Activated CD4-positive, alpha-beta T cell treated with anti-CD3 and anti-CD28 coated beads for 36 hours (primary cell): ENCODE measurements at regions of chr1 and their contacts with region 1.

Region 1: GRCh38 chr1:21659099-21659923 is 9.8 kb downstream of the RAP1GAP start:
- DNase-seq: peak; percentile 90
- ATAC-seq: peak; percentile 94
- H3K4me3 Mint-ChIP-seq: peak overlapping the region; percentile 56
- H3K27ac Mint-ChIP-seq: no peak overlapping the region
- H3K4me1 Mint-ChIP-seq: peaks cover 6% of the 10 kb centered on the region
- H3K27me3 Mint-ChIP-seq: peaks cover 22% of the 10 kb centered on the region

Region 2: GRCh38 chr1:21439721-21440629 is 219.3 kb before region 1 on chr1 and contains the start of gene NBPF3:
- CTCF ChIA-PET with region 1: no interaction called
- POLR2A ChIA-PET with region 1: no interaction called
- intact Hi-C with region 1: loop called in 1 of 2 experiments (anchors 5 kb)
- DNase-seq: peak; percentile 96
- ATAC-seq: peak; percentile 98
- H3K4me3 Mint-ChIP-seq: peak within 1 kb of the TSS; percentile 91
- H3K27ac Mint-ChIP-seq: peak within 1 kb of the TSS; percentile 93
- H3K4me1 Mint-ChIP-seq: peaks cover 17% of the 10 kb centered on the region
- H3K27me3 Mint-ChIP-seq: peaks cover 3% of the 10 kb centered on the region
- total RNA-seq, gene NBPF3: 8.5 to 9.9 TPM

Region 3: GRCh38 chr1:21594935-21595897 is 64.1 kb before region 1 on chr1:
- CTCF ChIA-PET with region 1: interaction called, 3 read pairs
- POLR2A ChIA-PET with region 1: no interaction called
- intact Hi-C with region 1: loop called in 1 of 2 experiments (anchors 1 kb)
- DNase-seq: peak; percentile 85
- ATAC-seq: peak; percentile 71
- H3K4me3 Mint-ChIP-seq: no peak overlapping the region
- H3K27ac Mint-ChIP-seq: no peak overlapping the region
- H3K4me1 Mint-ChIP-seq: peaks cover 5% of the 10 kb centered on the region
- H3K27me3 Mint-ChIP-seq: peaks cover 2% of the 10 kb centered on the region

Region 4: DNA sequence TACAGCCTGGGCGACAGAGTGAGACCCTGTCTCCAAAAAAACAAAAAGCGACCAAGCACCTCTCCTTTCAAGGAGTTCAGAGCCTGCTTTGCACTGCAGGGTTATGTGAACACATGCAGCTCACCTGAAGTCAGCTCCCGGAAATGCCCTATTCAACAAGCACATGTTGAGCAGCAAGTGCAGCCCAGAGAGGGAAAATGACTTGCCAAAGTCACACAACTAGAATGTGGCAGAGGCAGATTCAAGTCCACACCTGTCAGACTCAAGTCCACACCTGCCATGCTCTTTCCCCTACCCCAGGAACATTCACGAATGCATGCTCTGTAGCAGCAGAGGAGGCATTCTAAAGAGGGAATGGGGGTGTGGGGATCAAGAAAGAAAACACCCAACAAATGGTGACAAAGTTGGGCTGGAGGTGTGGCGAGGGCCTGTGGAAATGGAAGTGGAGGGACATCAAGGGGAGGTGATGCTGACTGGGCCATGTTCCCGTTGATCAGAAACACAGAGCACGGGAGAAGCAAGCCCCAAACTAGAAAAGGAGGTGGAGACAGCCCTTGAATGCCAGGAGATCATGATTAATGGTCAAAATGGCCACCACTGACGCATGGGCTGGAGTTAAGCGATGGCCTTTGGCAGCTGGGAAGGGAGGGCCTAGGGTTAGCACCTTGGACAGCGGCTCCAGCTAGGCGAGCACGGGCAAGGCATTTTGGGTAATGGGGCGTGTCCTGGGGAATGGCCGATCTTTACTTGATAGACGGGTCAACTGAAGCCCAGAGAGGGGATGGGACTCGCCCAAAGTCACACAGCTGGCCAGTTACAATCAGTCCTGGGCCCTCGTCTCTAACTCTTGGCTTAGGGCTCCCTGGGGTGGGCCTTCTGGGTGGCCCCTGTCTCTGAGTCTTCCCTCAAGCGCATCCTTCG is 11.6 kb before region 1 on chr1:
- CTCF ChIA-PET with region 1: interaction called, 4 read pairs
- POLR2A ChIA-PET with region 1: no interaction called
- intact Hi-C with region 1: loop called in 1 of 2 experiments (anchors 1 kb)
- DNase-seq: peak; percentile 75
- ATAC-seq: no peak
- H3K4me3 Mint-ChIP-seq: no peak overlapping the region
- H3K27ac Mint-ChIP-seq: no peak overlapping the region
- H3K4me1 Mint-ChIP-seq: peaks cover 13% of the 10 kb centered on the region
- H3K27me3 Mint-ChIP-seq: peaks cover 19% of the 10 kb centered on the region

Region 5: DNA sequence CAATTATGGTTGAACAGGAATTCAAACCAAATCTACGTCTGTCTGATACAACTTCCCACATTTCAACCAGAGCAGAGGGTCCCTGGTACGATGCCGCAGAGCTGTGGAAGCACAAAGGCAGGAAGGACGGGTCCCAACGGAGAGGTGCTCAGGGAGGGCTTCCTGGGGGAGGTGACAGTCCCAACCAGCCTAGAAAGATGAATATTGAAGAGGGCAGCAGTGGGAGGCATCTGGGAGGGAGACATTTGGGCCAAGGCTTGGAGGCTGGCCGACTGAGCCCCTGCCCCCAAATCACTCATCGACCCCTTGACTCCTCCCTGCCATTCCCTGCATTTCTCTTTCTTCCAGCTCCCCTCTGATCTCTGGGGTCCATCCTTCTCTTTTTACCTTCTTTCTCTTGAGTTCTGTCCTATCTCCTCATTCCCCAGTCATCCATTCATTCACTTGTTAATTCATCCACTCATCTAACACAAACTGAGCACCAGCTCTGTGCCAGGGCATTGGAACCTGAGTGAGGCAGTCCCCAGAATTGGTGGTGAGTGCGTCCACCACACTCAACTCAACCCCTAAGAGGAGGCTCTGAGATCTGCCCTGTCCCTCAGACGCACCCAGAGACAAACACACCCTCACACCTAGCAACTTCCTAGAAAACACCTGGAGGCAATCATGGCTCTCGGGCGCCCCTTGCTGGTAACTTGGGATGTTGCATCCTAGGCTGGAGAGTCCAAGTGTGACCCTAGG is 304.3 kb after region 1 on chr1:
- CTCF ChIA-PET with region 1: interaction called, 3 read pairs
- POLR2A ChIA-PET with region 1: no interaction called
- intact Hi-C with region 1: loop called (anchors 2 to 10 kb)
- DNase-seq: peak; percentile 91
- ATAC-seq: peak; percentile 98
- H3K4me3 Mint-ChIP-seq: no peak overlapping the region
- H3K27ac Mint-ChIP-seq: peak overlapping the region; percentile 73
- H3K4me1 Mint-ChIP-seq: peaks cover 8% of the 10 kb centered on the region
- H3K27me3 Mint-ChIP-seq: no peaks in the 10 kb centered on the region